Activated CD4-positive, alpha-beta memory T cell treated with anti-CD3 and anti-CD28 coated beads, Interleukin-2, amount 10 ng/mL, durations not matched to agents 7 days and 5 days (primary cell): ENCODE measurements at regions of chr1 and their contacts with region 1.

Region 1: DNA sequence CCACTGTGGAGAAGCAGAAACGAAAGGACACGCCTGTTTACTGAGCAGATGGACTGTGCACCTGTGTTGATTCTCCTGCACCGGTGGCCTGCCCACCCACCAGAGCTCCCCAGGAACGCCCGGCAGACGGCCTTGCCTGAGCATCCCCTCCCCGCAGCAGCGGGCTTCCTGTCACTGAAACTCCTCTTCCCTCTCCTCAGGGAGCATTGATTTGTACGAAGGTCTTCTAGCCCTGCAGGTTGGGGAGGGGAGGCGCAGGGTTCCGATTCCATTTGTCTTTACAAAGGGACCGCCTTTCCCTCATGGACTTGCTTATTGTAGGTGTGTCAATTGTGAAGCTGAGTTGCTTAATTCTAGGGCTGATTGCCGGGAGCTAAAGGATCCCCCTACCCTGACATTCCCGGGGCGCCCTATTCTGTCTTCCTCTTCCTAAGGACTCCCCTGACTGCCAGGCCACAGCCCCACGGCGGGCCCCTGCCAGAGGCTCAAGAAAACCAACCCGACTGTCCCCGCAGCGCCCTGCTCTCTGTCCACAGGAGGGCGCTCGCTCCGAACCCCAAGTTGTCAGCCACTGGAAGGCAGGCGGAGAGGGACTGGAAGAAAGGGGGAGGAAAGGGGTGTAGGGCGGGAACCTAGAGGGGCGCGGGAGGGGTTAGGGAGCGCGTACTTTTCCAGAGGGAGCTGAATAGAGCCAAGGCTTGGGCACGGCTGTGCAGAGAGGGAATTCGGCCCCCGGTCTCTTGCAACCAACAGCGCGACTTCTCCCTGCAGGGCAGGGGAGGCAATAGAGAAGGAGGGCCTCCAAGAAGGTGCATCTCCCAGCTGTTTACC is 2.8 kb downstream of the S100A6 start:
- DNase-seq: peak; percentile 89
- H3K4me3 Mint-ChIP-seq: peak overlapping the region; percentile 99
- H3K27ac Mint-ChIP-seq: peak overlapping the region; percentile 94
- H3K4me1 Mint-ChIP-seq: peaks cover 69% of the 10 kb centered on the region
- H3K27me3 Mint-ChIP-seq: no peaks in the 10 kb centered on the region

Region 2: DNA sequence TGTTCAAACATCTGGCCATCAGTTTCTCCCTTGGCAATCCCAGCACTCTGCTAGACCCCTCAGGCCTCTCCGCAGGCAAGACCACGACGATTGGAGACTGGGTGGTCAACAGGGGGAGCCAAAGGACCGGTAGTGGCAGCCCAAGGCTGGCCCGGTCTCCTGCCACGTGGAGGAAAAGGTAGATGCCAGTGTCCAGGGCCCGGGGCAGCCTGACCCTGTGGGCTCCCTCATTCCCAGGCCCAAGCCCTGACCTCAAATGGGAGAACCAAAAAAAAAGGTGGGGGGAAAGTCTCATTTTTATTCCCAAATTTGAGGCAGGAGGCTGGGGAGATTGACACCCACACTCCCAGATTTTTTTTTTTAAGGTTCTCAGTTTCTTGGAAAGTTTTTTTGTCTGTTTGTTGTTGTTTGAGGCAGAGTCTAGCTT is 22.0 kb before region 1 on chr1:
- CTCF ChIA-PET with region 1: interaction called, 83 read pairs
- POLR2A ChIA-PET with region 1: interaction called, 25 read pairs
- DNase-seq: peak; percentile 80
- H3K4me3 Mint-ChIP-seq: no peak overlapping the region
- H3K27ac Mint-ChIP-seq: no peak overlapping the region
- H3K4me1 Mint-ChIP-seq: peaks cover 40% of the 10 kb centered on the region
- H3K27me3 Mint-ChIP-seq: no peaks in the 10 kb centered on the region

Region 3: GRCh38 chr1:153545067-153546055 is 12.4 kb after region 1 on chr1 and contains the start of gene S100A4:
- CTCF ChIA-PET with region 1: interaction called, 117 read pairs
- POLR2A ChIA-PET with region 1: interaction called, 281 read pairs
- DNase-seq: peak; percentile 97
- H3K4me3 Mint-ChIP-seq: peak within 1 kb of the TSS; percentile 96
- H3K27ac Mint-ChIP-seq: peak within 1 kb of the TSS; percentile 98
- H3K4me1 Mint-ChIP-seq: peaks cover 90% of the 10 kb centered on the region
- H3K27me3 Mint-ChIP-seq: peaks cover 3% of the 10 kb centered on the region
- total RNA-seq, gene S100A4: 1,297 to 1,322 TPM

Region 4: DNA sequence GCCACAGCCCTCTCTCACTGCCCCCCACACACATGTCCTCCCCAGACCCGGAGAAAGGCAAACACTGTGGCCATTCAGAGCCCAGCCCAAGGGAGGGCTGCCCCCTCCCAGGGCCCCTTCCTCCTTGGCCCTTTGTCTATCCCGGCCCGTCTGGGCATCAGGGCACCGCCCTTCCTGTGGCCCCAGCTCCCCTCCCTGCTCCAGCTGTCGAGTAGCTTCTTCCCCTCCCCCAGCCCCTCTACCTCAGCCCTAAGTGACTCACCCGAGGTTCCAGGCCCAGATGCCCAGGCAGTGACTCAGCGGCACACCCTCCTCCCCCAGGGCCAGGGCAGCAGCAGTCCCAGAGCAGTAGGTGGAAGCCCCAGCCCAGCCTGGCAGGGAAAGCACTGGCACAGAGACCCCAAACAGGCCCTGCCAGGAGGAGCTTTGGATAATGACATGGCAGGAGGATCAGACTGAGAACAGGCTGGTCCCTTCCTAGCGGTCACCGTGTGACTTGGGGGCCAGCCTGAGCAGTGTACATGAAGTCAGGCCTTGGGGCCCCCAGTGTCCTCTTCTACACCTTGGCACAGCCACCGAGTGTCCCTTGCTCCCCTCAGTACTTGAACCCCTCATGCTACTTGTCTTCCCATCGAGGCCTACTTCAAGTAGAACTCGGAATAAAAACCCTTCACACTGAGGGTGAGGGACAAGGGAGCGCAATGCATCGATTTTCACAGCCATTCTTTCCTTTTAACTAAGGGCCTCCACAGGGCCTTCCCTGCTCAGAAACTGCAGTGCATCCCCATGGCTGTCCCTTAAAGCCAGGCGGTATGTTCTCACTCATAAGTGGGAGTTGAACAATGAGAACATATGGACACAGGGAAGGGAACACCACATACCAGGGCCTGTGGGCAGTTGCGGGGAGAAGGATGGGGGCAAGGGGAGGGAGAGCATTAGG is 33.7 kb after region 1 on chr1:
- CTCF ChIA-PET with region 1: interaction called, 202 read pairs
- POLR2A ChIA-PET with region 1: interaction called, 188 read pairs
- DNase-seq: peak; percentile 92
- H3K4me3 Mint-ChIP-seq: peak overlapping the region; percentile 44
- H3K27ac Mint-ChIP-seq: peak overlapping the region; percentile 100
- H3K4me1 Mint-ChIP-seq: peaks cover 47% of the 10 kb centered on the region
- H3K27me3 Mint-ChIP-seq: no peaks in the 10 kb centered on the region

Region 5: GRCh38 chr1:153598309-153599172 is 65.6 kb after region 1 on chr1:
- CTCF ChIA-PET with region 1: interaction called, 18 read pairs
- POLR2A ChIA-PET with region 1: no interaction called
- DNase-seq: no peak
- H3K4me3 Mint-ChIP-seq: no peak overlapping the region
- H3K27ac Mint-ChIP-seq: no peak overlapping the region
- H3K4me1 Mint-ChIP-seq: peaks cover 18% of the 10 kb centered on the region
- H3K27me3 Mint-ChIP-seq: no peaks in the 10 kb centered on the region